ENCODE measurements at regions of chr21 and their contacts with region 1.

Region 1: DNA sequence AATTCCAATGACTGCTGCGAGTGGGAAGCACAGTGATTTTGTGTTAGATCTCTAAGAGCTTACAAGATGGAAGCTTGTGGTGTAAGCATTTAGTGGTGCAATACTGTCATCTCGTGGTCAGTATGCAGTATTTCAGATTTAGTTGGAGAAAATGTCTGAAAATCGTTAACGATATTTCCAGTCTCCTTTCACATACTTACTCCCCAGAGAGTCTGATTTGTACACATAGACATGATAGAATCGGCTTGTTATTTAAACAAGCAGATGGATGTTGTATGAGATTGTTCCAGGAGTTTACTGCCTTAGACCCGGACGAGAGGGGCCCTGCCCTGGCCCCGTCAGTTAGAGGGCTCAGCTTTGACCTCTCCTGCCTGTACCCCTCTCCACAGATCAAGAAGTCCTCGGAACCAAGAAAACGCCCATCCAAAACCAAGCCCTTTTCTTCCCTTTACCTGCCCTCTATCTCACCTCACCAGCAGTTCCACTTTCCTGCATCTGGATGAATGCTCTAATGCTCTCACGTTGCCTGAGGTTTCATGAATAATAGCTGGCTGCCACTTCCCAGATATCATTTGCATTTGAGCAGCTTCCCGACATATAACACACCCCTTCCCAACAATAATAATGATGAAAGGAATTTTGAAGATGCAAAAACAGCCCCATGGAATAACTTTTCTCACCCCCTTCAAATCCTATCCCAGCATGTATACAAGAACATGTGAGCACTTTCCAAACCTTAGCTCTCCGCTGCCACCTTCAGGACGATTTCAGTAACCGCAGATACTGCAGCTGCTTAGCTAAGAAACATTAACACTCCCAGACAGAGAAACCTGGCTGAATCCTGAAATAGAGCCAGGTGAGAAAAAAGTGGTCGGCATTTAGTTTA is 247.3 kb downstream of the LTN1 start:
- DNase-seq: peak; percentile 94
- ATAC-seq: peak; percentile 82
- H3K4me3 ChIP-seq: peak overlapping the region; percentile 38; the same call in 1 of the 2 replicates
- H3K27ac ChIP-seq: peak overlapping the region; percentile 93
- H3K4me1 ChIP-seq: peaks cover 6% of the 10 kb centered on the region
- H3K27me3 ChIP-seq: no peaks in the 10 kb centered on the region
- CTCF ChIP-seq: peak; percentile 99
- POLR2A ChIP-seq: peak; percentile 60
- RAD21 ChIP-seq: peak; percentile 100

Region 2: DNA sequence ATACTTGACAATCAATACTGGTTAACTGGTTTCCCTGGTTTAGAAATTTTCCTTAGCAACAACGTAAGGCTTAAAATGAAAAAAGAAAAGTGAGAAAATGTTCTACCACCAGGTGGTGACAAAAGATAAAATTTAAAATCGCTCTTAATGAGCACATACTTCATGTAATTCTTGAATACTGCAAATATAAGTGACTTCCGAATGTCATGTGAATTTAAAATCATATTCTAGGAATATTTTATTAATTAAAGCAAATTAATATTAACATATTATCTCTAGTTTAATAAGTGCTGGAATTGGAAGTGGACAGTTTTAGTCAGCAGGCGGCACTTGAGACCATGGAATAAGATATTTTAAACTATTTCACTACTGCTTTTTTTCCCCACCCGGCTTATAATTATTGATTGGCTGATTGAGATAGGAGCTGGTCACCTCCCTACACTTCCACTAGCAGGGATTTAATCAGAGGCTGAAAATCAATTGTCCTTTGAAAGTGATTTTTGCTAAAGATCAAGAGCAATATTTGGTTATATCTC is 1895.2 kb before region 1 on chr21:
- CTCF ChIA-PET with region 1: interaction called, 5 read pairs
- POLR2A ChIA-PET with region 1: no interaction called
- dilution Hi-C with region 1: no loop called
- in situ Hi-C with region 1: loop called (anchors 5 kb)
- intact Hi-C with region 1: loop called (anchors 1 kb)
- DNase-seq: peak; percentile 59
- ATAC-seq: no peak
- H3K4me3 ChIP-seq: no peak overlapping the region
- H3K27ac ChIP-seq: peak overlapping the region; percentile 33; the same call in 1 of the 2 replicates
- H3K4me1 ChIP-seq: peaks cover 8% of the 10 kb centered on the region
- H3K27me3 ChIP-seq: no peaks in the 10 kb centered on the region
- CTCF ChIP-seq: peak; percentile 58
- POLR2A ChIP-seq: no peak; the same call in 1 of the 2 replicates
- RAD21 ChIP-seq: peak; percentile 72

Region 3: DNA sequence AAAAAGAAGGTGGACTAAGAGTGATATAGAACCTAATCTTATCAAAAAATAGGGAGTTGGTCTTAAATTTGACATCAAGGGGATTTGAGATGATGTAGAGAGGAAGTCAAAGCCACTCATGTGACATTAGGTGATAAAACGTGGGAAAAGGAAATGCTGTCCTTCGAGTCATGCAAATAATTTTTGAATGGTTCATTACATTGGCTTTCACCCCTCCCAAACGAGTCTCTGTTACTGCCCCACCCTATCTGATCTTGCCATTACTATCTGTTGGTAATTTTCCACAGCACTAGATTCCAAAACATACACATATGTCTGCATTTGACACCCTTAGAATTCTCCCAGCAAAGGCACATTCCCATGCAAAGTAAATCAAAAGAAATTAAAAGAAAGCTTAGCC is 1247.3 kb before region 1 on chr21:
- CTCF ChIA-PET with region 1: no interaction called
- POLR2A ChIA-PET with region 1: no interaction called
- dilution Hi-C with region 1: no loop called
- in situ Hi-C with region 1: no loop called
- intact Hi-C with region 1: loop called (anchors 10 kb)
- DNase-seq: peak; percentile 14
- ATAC-seq: no peak
- H3K4me3 ChIP-seq: no peak overlapping the region
- H3K27ac ChIP-seq: no peak overlapping the region
- H3K4me1 ChIP-seq: no peaks in the 10 kb centered on the region
- H3K27me3 ChIP-seq: no peaks in the 10 kb centered on the region
- CTCF ChIP-seq: no peak
- POLR2A ChIP-seq: no peak
- RAD21 ChIP-seq: no peak

Region 4: GRCh38 chr21:27721675-27722074 is 1023.7 kb before region 1 on chr21:
- CTCF ChIA-PET with region 1: no interaction called
- POLR2A ChIA-PET with region 1: interaction called, 11 read pairs
- dilution Hi-C with region 1: no loop called
- in situ Hi-C with region 1: no loop called
- intact Hi-C with region 1: no loop called
- DNase-seq: no peak
- ATAC-seq: no peak
- H3K4me3 ChIP-seq: no peak overlapping the region
- H3K27ac ChIP-seq: no peak overlapping the region
- H3K4me1 ChIP-seq: peaks cover 4% of the 10 kb centered on the region
- H3K27me3 ChIP-seq: no peaks in the 10 kb centered on the region
- CTCF ChIP-seq: no peak
- POLR2A ChIP-seq: no peak
- RAD21 ChIP-seq: no peak

Region 5: GRCh38 chr21:28336314-28336713 is 409.1 kb before region 1 on chr21:
- CTCF ChIA-PET with region 1: interaction called, 19 read pairs
- POLR2A ChIA-PET with region 1: no interaction called
- dilution Hi-C with region 1: no loop called
- in situ Hi-C with region 1: loop called (anchors 5 kb)
- intact Hi-C with region 1: loop called (anchors 1 kb)
- DNase-seq: peak; percentile 96
- ATAC-seq: peak; percentile 66
- H3K4me3 ChIP-seq: no peak overlapping the region
- H3K27ac ChIP-seq: peak overlapping the region; percentile 74; the same call in 1 of the 2 replicates
- H3K4me1 ChIP-seq: peaks cover 11% of the 10 kb centered on the region
- H3K27me3 ChIP-seq: no peaks in the 10 kb centered on the region
- CTCF ChIP-seq: peak; percentile 71
- POLR2A ChIP-seq: no peak
- RAD21 ChIP-seq: peak; percentile 76

Region 6: GRCh38 chr21:28537371-28538079 is 207.8 kb before region 1 on chr21:
- CTCF ChIA-PET with region 1: interaction called, 5 read pairs
- POLR2A ChIA-PET with region 1: no interaction called
- dilution Hi-C with region 1: no loop called
- in situ Hi-C with region 1: no loop called
- intact Hi-C with region 1: loop called (anchors 2 kb)
- DNase-seq: peak; percentile 100
- ATAC-seq: peak; percentile 48
- H3K4me3 ChIP-seq: no peak overlapping the region
- H3K27ac ChIP-seq: peak overlapping the region; percentile 76; the same call in 1 of the 2 replicates
- H3K4me1 ChIP-seq: peaks cover 17% of the 10 kb centered on the region
- H3K27me3 ChIP-seq: no peaks in the 10 kb centered on the region
- CTCF ChIP-seq: no peak
- POLR2A ChIP-seq: no peak
- RAD21 ChIP-seq: peak; percentile 12; the same call in 1 of the 2 replicates

Region 7: GRCh38 chr21:28554660-28555475 is 190.5 kb before region 1 on chr21:
- CTCF ChIA-PET with region 1: no interaction called
- POLR2A ChIA-PET with region 1: no interaction called
- dilution Hi-C with region 1: no loop called
- in situ Hi-C with region 1: no loop called
- intact Hi-C with region 1: no loop called
- DNase-seq: peak; percentile 63
- ATAC-seq: no peak
- H3K4me3 ChIP-seq: no peak overlapping the region
- H3K27ac ChIP-seq: no peak overlapping the region
- H3K4me1 ChIP-seq: peaks cover 3% of the 10 kb centered on the region
- H3K27me3 ChIP-seq: no peaks in the 10 kb centered on the region
- CTCF ChIP-seq: no peak
- POLR2A ChIP-seq: no peak
- RAD21 ChIP-seq: no peak

Measured in IMR-90 (cell line).